Motor neuron (in vitro differentiated cells): ENCODE measurements at regions of chr4 and their contacts with region 1.

Region 1: DNA sequence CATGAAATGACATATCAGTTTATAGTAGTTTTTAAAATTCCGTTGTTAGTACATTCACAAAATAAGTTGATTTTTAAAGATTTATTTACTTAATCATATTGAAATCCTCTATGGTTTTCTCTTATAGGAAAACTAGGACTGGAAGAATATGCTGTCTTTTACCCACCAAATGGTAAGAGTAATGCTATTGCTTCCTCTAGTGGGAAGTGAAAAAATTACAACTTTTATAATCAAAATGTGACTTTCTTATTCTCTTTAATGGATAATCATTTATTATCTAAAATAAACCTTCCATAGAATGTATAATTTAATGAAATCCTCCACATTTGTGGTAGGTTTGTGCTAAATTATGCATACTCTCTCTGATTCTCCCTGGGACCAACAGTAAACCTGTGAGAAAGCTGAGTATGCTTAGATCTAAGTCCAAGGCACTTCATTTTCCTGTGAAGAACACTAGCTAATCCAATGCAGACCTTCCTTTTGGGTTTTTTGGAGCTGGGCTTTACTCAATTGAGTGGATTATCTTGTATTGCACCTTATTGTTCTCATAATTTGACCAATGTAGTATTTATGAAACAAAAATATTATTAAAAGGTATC is 136.2 kb downstream of the TBC1D19 start:
- ATAC-seq: peak in 1 of 8 experiments; percentile 34
- H3K4me3 ChIP-seq: no peak overlapping the region
- H3K27ac ChIP-seq: no peak overlapping the region
- H3K4me1 ChIP-seq: no peaks in the 10 kb centered on the region

Region 2: DNA sequence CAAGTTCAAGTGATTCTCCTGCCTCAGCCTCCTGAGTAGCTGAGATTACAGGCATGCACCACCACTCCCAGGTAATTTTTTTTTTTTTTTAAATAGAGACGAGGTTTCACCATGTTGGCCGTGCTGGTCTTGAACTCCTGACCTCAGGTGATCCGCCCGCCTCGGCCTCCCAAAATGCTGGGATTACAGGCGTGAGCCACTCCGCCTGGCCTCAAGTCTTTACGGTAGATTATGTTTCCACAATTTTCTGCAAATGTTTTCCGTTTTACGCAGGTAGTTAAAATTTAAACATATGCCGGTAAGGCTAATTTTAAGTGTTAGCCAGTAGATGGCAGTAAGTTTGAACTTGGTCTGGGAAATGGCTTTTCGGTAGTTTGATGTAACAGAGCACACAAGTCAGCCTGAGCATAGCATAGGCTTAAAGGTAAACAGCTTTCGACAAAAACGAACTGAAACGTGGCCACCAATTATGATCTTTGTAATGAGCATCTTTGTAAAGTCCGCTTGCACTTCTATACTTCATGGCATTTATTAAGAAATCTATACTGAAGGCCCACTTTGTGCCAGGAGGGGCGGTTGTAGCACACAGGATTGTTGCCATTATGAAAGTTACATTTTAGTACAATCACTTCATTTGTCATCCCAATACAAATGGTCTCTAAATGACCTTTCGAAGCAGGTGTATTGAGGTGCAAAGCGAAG is 260.8 kb before region 1 on chr4:
- in situ Hi-C with region 1: loop called in 3 of 9 experiments (anchors 25 kb)
- ATAC-seq: peak in 3 of 8 experiments; percentile 75 to 82 (median 78)
- H3K4me3 ChIP-seq: no peak overlapping the region
- H3K27ac ChIP-seq: no peak overlapping the region
- H3K4me1 ChIP-seq: no peaks in the 10 kb centered on the region

Region 3: DNA sequence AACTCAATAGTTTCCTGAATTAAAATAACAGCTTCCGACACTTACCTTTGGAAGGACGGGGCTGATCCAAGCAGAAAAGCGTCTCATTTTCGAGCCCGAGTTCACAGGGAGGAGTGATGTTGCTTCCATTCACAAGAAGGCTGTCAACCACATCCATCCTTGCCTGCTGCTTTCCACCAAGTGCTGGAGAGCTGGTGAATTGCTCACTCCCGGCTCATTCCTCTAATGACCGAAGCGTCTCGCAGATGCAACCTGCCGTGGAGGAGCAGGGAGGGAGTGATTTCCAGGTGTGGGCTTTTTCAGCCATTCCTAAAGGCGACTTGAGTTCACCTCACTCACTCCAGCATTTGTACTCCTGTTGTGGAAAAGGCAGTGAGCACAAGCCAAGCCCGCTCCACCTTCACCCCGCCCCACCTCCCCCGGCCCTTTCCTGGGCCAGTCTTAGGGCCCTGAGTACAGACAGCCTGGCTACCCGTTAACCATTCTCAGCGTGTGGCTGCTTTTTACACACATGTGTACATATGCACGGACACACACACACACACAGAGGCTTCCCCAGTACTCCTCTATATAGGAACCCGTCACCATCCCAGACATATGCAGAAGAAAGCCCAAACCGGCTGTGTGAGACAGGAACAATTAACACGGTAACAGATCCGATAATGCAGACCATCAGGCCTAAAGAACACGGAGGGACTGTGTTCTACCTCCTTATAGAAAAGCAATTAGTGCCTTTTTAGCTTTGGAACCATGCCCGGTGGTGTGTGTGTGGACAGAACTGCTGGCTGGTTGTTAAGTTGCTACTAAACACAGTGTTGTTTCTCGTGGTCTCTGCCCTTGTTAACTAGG is 229.7 kb before region 1 on chr4 and contains the start of gene CCKAR:
- in situ Hi-C with region 1: no loop called
- ATAC-seq: peak in 4 of 8 experiments; percentile 37 to 53 (median 39)
- H3K4me3 ChIP-seq: no peak within 1 kb of the TSS
- H3K27ac ChIP-seq: no peak within 1 kb of the TSS
- H3K4me1 ChIP-seq: peaks cover 5 to 7% of the 10 kb centered on the region in 2 donors
- total RNA-seq, gene CCKAR: 0.05 to 0.93 (median 0.22) TPM in 5 of 8 experiments, not detected in the others